Activated naive CD4-positive, alpha-beta T cell treated with anti-CD3 and anti-CD28 coated beads for 36 hours (primary cell): ENCODE measurements at regions of chr12 and their contacts with region 1.

Region 1: GRCh38 chr12:6851921-6852650 is at the start of gene USP5:
- DNase-seq: peak; percentile 99
- H3K4me3 Mint-ChIP-seq: peak within 1 kb of the TSS; percentile 86
- H3K27ac Mint-ChIP-seq: peak within 1 kb of the TSS; percentile 93
- H3K4me1 Mint-ChIP-seq: peaks cover 35% of the 10 kb centered on the region
- H3K27me3 Mint-ChIP-seq: no peaks in the 10 kb centered on the region
- total RNA-seq, gene USP5: 115 to 123 TPM

Region 2: GRCh38 chr12:6335451-6336078 is 516.5 kb before region 1 on chr12:
- CTCF ChIA-PET with region 1: no interaction called
- intact Hi-C with region 1: loop called (anchors 5 kb)
- DNase-seq: peak; percentile 94
- H3K4me3 Mint-ChIP-seq: no peak overlapping the region
- H3K27ac Mint-ChIP-seq: no peak overlapping the region
- H3K4me1 Mint-ChIP-seq: peaks cover 46% of the 10 kb centered on the region
- H3K27me3 Mint-ChIP-seq: no peaks in the 10 kb centered on the region

Region 3: GRCh38 chr12:6533923-6534694 is 318.0 kb before region 1 on chr12 and contains the start of gene GAPDH:
- CTCF ChIA-PET with region 1: no interaction called
- intact Hi-C with region 1: loop called (anchors 1 kb)
- DNase-seq: peak; percentile 90
- H3K4me3 Mint-ChIP-seq: peak within 1 kb of the TSS; percentile 94
- H3K27ac Mint-ChIP-seq: peak within 1 kb of the TSS; percentile 99
- H3K4me1 Mint-ChIP-seq: peaks cover 41% of the 10 kb centered on the region
- H3K27me3 Mint-ChIP-seq: no peaks in the 10 kb centered on the region
- total RNA-seq, gene GAPDH: 6,537 to 6,787 TPM

Region 4: DNA sequence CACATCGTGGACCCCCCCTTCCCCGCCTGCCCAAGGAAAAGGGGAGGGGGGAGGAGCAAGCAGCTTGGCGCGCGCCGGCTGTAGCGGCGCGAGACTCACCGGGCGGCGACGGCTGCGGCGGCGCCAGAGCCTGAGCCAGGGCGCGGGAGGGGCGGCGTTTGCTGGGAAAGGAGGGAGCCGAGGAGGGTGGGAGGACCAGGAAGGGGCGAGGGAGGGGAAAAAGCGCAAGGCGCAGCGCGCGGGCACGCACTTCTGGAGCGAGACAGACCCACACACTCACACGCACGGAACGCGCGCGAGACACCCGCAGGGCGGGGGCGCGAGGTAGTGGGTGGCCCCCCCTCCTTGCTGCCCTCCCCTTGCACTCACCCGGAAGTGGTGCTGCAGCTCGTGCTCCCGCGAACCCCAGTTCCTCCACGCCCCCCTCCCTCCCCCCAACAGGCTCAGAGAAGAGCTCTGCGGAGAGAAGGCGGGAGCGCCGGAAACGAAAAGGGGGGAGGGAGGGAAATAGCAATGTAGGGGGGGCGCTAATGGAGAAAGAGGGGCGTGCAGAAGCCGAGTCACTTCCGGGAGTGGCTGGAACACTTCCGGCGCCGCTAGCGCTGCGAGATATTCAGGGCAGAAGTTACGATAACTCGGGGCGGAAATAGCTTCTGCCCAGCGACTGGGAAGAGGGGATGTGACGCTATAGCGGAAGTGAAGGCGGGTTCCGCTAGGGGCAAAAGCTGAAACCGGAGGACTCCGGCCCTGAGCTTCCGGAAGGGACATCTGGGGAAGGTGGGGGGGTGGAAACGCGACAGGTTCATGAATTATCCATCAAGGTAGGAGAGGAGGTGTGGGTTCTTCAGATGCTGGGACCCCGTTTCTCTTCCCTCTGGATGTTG is 162.8 kb before region 1 on chr12 and contains the start of gene ZNF384:
- CTCF ChIA-PET with region 1: interaction called, 3 read pairs
- intact Hi-C with region 1: loop called (anchors 1 kb)
- DNase-seq: peak; percentile 97
- H3K4me3 Mint-ChIP-seq: peak within 1 kb of the TSS; percentile 92
- H3K27ac Mint-ChIP-seq: peak within 1 kb of the TSS; percentile 95
- H3K4me1 Mint-ChIP-seq: peaks cover 52% of the 10 kb centered on the region
- H3K27me3 Mint-ChIP-seq: no peaks in the 10 kb centered on the region
- total RNA-seq, gene ZNF384: 52.6 to 56.6 TPM

Region 5: GRCh38 chr12:6813363-6813762 is 38.7 kb before region 1 on chr12:
- CTCF ChIA-PET with region 1: no interaction called
- intact Hi-C with region 1: no loop called
- DNase-seq: no peak
- H3K4me3 Mint-ChIP-seq: no peak overlapping the region
- H3K27ac Mint-ChIP-seq: no peak overlapping the region
- H3K4me1 Mint-ChIP-seq: peaks cover 17% of the 10 kb centered on the region
- H3K27me3 Mint-ChIP-seq: no peaks in the 10 kb centered on the region

Region 6: GRCh38 chr12:6825398-6826124 is 26.5 kb before region 1 on chr12:
- CTCF ChIA-PET with region 1: interaction called, 6 read pairs
- intact Hi-C with region 1: loop called (anchors 1 kb)
- DNase-seq: peak; percentile 92
- H3K4me3 Mint-ChIP-seq: no peak overlapping the region
- H3K27ac Mint-ChIP-seq: no peak overlapping the region
- H3K4me1 Mint-ChIP-seq: peaks cover 28% of the 10 kb centered on the region
- H3K27me3 Mint-ChIP-seq: peaks cover 19% of the 10 kb centered on the region

Region 7: DNA sequence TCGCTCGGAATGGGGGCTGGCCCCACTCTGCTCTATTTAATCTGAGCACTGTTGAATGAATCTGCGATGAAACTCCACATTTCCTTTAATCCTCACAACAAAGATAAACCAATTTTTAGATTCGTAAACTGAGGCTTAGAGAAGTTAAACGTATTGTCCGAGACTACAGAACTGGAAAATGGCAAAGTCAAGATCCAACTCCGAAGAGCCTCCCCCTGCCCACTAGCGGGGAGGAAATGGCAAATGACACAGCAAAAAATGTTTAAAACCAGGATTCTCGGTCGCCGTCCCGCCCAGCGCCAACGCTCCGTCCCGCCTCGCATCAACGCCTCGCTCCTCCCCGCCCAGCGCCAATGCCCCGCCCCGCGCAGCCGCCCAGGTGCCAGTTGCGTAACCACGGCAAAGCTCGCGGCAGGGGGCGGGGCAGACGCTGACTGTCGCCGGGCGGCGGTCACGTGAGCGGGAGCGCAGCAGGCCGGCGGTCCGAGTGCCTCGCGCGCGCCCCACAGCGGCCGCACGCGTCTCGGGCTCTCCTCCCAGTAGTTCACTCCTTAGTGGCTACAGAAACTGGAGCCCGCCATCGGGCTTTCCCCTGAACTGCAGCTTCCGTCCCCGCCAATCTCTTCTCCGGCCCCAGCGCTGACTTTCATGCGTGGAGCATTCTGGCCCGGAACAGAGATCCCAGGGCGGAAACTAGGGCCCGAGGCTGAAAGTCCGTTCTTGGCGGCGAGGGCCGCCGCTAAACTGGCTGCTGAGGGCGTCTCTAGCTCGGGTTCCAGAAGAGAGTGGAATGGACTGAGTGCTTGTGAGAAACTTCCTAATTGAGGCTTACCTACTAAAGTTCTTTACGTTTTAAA is 38.9 kb after region 1 on chr12:
- CTCF ChIA-PET with region 1: interaction called, 10 read pairs
- intact Hi-C with region 1: loop called (anchors 1 kb)
- DNase-seq: peak; percentile 100
- H3K4me3 Mint-ChIP-seq: peak overlapping the region; percentile 90
- H3K27ac Mint-ChIP-seq: peak overlapping the region; percentile 98
- H3K4me1 Mint-ChIP-seq: peaks cover 16% of the 10 kb centered on the region
- H3K27me3 Mint-ChIP-seq: no peaks in the 10 kb centered on the region

Region 8: DNA sequence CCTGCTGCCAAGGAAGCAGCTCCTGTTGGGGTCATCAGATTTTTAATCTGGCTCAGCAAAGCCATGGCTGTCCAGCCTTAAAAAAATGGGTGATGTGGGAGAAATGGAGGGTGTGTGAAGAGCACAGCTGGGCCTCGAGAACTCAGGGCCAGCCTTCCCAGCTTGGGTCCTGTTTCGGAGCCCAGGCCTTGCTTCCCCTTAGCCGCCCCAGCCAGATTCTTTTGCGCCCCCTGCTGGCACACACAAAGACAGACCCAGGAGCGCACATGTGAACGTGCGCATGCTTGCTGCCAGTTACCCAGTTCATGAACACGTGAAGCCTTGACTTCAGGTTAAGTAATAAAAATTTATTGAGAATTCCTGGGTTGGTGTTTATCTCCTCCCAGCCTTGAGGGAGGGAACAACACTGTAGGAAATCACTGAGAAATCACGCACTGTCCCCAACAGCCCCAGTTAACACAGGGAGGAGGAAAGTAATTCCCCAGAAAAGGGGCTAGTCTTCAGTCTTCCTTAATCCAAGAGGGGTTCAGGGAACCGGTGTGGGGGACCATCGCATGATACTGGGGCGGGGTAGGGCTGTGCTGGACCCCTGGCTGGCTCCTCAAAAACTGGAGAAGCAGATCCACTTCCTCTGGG is 113.1 kb after region 1 on chr12:
- CTCF ChIA-PET with region 1: no interaction called
- intact Hi-C with region 1: loop called (anchors 1 kb)
- DNase-seq: peak; percentile 95
- H3K4me3 Mint-ChIP-seq: no peak overlapping the region
- H3K27ac Mint-ChIP-seq: peak overlapping the region; percentile 93
- H3K4me1 Mint-ChIP-seq: peaks cover 81% of the 10 kb centered on the region
- H3K27me3 Mint-ChIP-seq: no peaks in the 10 kb centered on the region

Region 9: GRCh38 chr12:7068240-7068993 is 216.3 kb after region 1 on chr12:
- CTCF ChIA-PET with region 1: no interaction called
- intact Hi-C with region 1: no loop called
- DNase-seq: no peak
- H3K4me3 Mint-ChIP-seq: no peak overlapping the region
- H3K27ac Mint-ChIP-seq: no peak overlapping the region
- H3K4me1 Mint-ChIP-seq: no peaks in the 10 kb centered on the region
- H3K27me3 Mint-ChIP-seq: no peaks in the 10 kb centered on the region